ENCODE measurements at regions of chr1 and their contacts with region 1.

Region 1: DNA sequence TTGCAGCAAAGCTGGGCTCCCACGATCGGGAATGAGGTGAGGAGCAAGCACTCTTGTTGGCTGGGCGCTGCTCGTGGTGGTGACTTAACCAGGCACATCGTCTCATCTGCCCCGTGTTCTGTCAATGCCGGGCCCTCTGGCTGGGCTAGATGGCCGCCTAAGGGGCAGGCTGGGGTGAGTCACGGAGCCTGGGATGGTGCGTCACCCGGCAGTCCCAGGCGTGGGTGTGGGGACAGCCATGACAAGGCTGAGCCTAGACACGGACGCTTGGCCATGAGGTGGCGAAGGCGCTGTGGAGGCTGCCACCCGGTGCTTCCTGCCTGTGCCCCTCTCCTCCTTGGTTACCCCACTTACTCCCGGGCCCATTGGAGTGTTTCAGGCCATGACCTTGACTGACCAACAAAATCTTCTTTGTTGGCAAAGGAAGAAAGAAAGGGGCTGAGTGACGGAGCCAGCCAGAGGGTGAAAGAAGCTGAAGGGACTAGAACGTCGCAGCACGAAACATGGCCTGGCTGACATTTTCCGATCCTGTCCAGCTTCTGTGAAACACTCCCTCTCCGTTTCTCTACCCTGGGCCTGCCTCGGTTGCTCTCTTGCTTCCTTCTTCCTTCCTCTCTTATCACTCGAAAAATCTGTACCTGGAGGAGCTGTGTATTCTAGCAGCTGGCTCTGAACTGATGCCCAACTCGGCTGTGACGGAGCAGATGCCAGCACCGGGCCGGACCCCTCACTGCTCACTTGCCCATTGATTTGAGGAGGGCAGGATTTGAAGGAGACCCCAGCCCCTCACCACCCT is 596 bp downstream of the CD247 start:
- DNase-seq: peak; percentile 76
- H3K4me3 Mint-ChIP-seq: peak overlapping the region; percentile 97
- H3K27ac Mint-ChIP-seq: peak overlapping the region; percentile 98
- H3K4me1 Mint-ChIP-seq: peaks cover 59% of the 10 kb centered on the region
- H3K27me3 Mint-ChIP-seq: peaks cover 7% of the 10 kb centered on the region

Region 2: GRCh38 chr1:167447521-167448136 is 70.1 kb before region 1 on chr1:
- intact Hi-C with region 1: loop called (anchors 1 kb)
- DNase-seq: peak; percentile 70
- H3K4me3 Mint-ChIP-seq: peak overlapping the region; percentile 68
- H3K27ac Mint-ChIP-seq: peak overlapping the region; percentile 90
- H3K4me1 Mint-ChIP-seq: peaks cover 77% of the 10 kb centered on the region
- H3K27me3 Mint-ChIP-seq: no peaks in the 10 kb centered on the region

Region 3: GRCh38 chr1:167474191-167474716 is 43.5 kb before region 1 on chr1:
- intact Hi-C with region 1: loop called (anchors 1 kb)
- DNase-seq: no peak
- H3K4me3 Mint-ChIP-seq: peak overlapping the region; percentile 54
- H3K27ac Mint-ChIP-seq: peak overlapping the region; percentile 81
- H3K4me1 Mint-ChIP-seq: peaks cover 72% of the 10 kb centered on the region
- H3K27me3 Mint-ChIP-seq: no peaks in the 10 kb centered on the region

Region 4: DNA sequence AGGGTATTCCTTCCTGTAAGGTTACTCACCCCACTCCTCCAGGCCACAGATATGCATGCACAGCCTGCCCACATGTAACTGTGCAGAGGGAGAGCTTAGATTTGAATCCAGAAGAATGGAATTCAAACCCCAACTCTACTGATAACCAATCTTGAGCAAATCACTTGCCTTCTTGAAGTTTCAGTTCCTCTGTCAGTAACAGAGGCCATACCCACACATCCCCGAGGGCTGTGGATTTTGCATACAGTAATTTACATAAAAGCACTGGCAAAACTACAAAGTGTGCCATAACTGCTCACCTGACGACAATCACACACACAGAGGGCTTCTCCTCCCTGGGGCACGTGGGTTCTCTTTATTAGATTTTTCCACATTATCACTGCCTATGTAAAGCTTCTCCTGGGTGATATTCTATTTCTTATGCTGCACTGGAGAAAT is 18.1 kb before region 1 on chr1:
- intact Hi-C with region 1: loop called (anchors 1 kb)
- DNase-seq: no peak
- H3K4me3 Mint-ChIP-seq: peak overlapping the region; percentile 55
- H3K27ac Mint-ChIP-seq: peak overlapping the region; percentile 95
- H3K4me1 Mint-ChIP-seq: peaks cover 99% of the 10 kb centered on the region
- H3K27me3 Mint-ChIP-seq: no peaks in the 10 kb centered on the region

Measured in activated T-helper 1 cell treated with anti-CD3 and anti-CD28 coated beads, Interleukin-12 subunit alpha, Interleukin-12 subunit beta, Interleukin-2, Interleukin-4 antibody, amounts not matched to agents 30 ng/mL and 10 ng/mL and 1 ng/mL, durations not matched to agents 14 hours and 24 hours and 36 hours (primary cell).